ENCODE measurements at regions of chr2 and their contacts with region 1.

Region 1: DNA sequence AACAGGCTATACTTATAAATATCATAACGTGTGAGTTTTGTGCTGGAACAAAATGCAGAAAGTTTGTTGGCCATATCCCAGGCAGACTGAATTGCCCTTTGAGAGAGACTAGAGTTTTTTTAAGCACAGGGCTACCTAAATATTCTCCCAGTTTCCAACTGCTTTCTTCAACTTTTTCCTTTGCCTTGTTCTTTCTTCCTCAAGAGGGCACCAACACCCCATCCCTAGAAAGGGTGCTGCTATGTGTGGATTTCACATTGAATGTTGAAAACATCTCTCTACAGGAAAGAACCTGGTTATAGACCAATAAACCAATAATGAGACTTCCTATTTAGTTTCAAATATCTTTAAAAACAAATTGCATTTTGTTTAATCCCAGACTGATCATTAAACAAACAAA is 87.9 kb downstream of the ICOS start:
- DNase-seq: peak; percentile 47
- H3K4me3 Mint-ChIP-seq: no peak overlapping the region
- H3K27ac Mint-ChIP-seq: no peak overlapping the region
- H3K4me1 Mint-ChIP-seq: peaks cover 64% of the 10 kb centered on the region
- H3K27me3 Mint-ChIP-seq: no peaks in the 10 kb centered on the region

Region 2: GRCh38 chr2:203014456-203015199 is 1009.9 kb before region 1 on chr2 and contains the start of gene NBEAL1:
- CTCF ChIA-PET with region 1: no interaction called
- POLR2A ChIA-PET with region 1: no interaction called
- intact Hi-C with region 1: loop called (anchors 10 kb)
- DNase-seq: peak; percentile 98
- H3K4me3 Mint-ChIP-seq: peak within 1 kb of the TSS; percentile 94
- H3K27ac Mint-ChIP-seq: peak within 1 kb of the TSS; percentile 90
- H3K4me1 Mint-ChIP-seq: peaks cover 31% of the 10 kb centered on the region
- H3K27me3 Mint-ChIP-seq: no peaks in the 10 kb centered on the region
- total RNA-seq, gene NBEAL1: 10.6 to 11.6 TPM

Region 3: DNA sequence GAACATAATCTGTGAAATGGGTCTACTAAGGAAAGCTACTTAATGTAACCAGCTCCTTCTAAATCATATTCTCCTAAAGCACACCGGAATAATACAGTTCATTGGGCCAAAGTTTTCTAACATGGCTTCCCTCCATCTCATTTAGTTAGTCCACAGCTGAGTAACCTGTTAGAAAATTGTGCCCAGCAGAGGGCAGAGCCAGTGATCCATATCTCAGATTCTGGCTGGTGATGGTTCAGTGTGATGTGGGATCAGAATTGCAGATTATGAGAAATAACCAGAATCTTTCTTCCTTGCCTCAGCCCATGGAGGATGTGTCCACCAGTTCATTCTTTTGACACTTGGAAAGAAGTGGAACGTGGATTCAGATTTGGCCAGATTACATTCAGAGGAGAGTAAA is 166.3 kb before region 1 on chr2:
- CTCF ChIA-PET with region 1: no interaction called
- POLR2A ChIA-PET with region 1: no interaction called
- intact Hi-C with region 1: no loop called
- DNase-seq: peak; percentile 66
- H3K4me3 Mint-ChIP-seq: peak overlapping the region; percentile 25
- H3K27ac Mint-ChIP-seq: peak overlapping the region; percentile 81
- H3K4me1 Mint-ChIP-seq: peaks cover 84% of the 10 kb centered on the region
- H3K27me3 Mint-ChIP-seq: no peaks in the 10 kb centered on the region

Region 4: DNA sequence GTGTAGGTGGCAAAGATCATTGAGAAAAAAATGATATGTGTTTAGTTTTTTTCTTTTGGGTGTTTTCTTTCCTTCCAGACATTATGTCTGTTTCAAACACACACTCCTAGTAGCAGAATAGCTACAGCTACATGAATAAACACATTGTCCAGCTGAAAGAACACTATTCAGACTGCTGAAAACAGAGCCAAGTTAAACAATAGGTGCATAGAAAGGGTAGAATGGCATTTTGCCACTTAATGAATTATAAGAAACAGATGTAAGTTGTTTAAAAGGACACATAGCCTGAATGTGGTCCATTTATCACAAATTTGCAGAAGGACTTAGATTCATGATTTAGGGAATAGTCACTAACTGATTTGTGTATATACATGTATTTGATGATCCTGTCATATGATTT is 136.8 kb before region 1 on chr2:
- CTCF ChIA-PET with region 1: no interaction called
- POLR2A ChIA-PET with region 1: interaction called, 3 read pairs
- intact Hi-C with region 1: loop called (anchors 2 kb)
- DNase-seq: no peak
- H3K4me3 Mint-ChIP-seq: no peak overlapping the region
- H3K27ac Mint-ChIP-seq: peak overlapping the region; percentile 90
- H3K4me1 Mint-ChIP-seq: peaks cover 84% of the 10 kb centered on the region
- H3K27me3 Mint-ChIP-seq: peaks cover 2% of the 10 kb centered on the region

Region 5: GRCh38 chr2:203989521-203989920 is 35.0 kb before region 1 on chr2:
- CTCF ChIA-PET with region 1: interaction called, 3 read pairs
- POLR2A ChIA-PET with region 1: interaction called, 8 read pairs
- intact Hi-C with region 1: loop called (anchors 1 kb)
- DNase-seq: no peak
- H3K4me3 Mint-ChIP-seq: peak overlapping the region; percentile 18
- H3K27ac Mint-ChIP-seq: peak overlapping the region; percentile 86
- H3K4me1 Mint-ChIP-seq: peaks cover 35% of the 10 kb centered on the region
- H3K27me3 Mint-ChIP-seq: no peaks in the 10 kb centered on the region

Region 6: DNA sequence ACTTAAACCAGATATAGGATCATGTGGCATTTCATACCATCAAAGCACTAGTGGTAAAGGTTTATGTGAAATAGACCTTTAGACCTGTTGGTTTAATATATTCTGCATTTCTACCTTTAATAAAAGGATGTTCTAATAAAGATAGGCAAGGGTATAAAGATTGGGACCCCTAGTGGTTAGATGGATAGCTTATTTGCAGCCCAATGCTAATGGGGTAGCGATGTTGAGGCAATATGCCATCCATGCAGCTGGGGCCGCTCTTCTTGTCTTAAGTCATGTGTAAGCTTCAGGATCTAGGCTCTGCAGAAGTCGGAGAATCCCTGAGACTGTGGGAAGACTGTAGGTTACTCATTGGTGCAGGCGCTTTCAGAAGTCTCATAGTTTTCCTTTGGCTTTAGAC is 27.0 kb after region 1 on chr2:
- CTCF ChIA-PET with region 1: interaction called, 11 read pairs
- POLR2A ChIA-PET with region 1: no interaction called
- intact Hi-C with region 1: loop called (anchors 2 kb)
- DNase-seq: no peak
- H3K4me3 Mint-ChIP-seq: no peak overlapping the region
- H3K27ac Mint-ChIP-seq: no peak overlapping the region
- H3K4me1 Mint-ChIP-seq: peaks cover 16% of the 10 kb centered on the region
- H3K27me3 Mint-ChIP-seq: no peaks in the 10 kb centered on the region

Region 7: DNA sequence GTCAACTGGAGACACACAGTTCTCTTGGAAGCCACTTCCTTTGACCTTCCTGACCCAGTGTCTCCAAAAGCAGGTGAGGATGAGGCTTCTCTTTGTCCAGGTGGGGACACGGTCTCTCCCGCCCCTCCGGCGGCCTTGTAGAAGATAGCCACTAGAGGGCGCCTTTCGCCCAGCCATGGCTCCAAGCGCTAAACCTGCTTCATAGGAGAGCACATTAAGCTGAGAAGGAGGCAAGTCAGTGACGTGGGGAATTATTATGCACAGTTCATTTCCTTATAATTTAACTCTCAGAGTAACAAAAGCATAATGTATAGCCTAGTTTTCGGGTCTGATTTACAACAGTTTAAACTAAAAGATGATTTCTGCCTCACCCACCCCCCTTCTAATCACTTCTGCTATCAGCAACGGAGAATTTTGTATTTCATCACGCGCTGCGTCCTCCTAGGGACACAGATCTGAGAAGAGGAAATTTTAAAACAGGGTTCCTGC is 120.8 kb after region 1 on chr2:
- CTCF ChIA-PET with region 1: interaction called, 13 read pairs
- POLR2A ChIA-PET with region 1: no interaction called
- intact Hi-C with region 1: no loop called
- DNase-seq: peak; percentile 88
- H3K4me3 Mint-ChIP-seq: peak overlapping the region; percentile 73
- H3K27ac Mint-ChIP-seq: no peak overlapping the region
- H3K4me1 Mint-ChIP-seq: peaks cover 10% of the 10 kb centered on the region
- H3K27me3 Mint-ChIP-seq: peaks cover 12% of the 10 kb centered on the region

Region 8: GRCh38 chr2:204197336-204198005 is 173.0 kb after region 1 on chr2:
- CTCF ChIA-PET with region 1: no interaction called
- POLR2A ChIA-PET with region 1: no interaction called
- intact Hi-C with region 1: no loop called
- DNase-seq: no peak
- H3K4me3 Mint-ChIP-seq: no peak overlapping the region
- H3K27ac Mint-ChIP-seq: no peak overlapping the region
- H3K4me1 Mint-ChIP-seq: no peaks in the 10 kb centered on the region
- H3K27me3 Mint-ChIP-seq: peaks cover 11% of the 10 kb centered on the region

Measured in activated CD4-positive, alpha-beta memory T cell treated with anti-CD3 and anti-CD28 coated beads for 36 hours (primary cell).